Activated B cell treated with CpG ODN at 0.5 μM for 24 hours (primary cell): ENCODE measurements at regions of chr1 and their contacts with region 1.

Region 1: GRCh38 chr1:20507564-20508410 is at the start of gene MUL1:
- DNase-seq: peak; percentile 96
- ATAC-seq: peak; percentile 90
- H3K4me3 Mint-ChIP-seq: peak within 1 kb of the TSS; percentile 89
- H3K27ac Mint-ChIP-seq: peak within 1 kb of the TSS; percentile 89
- H3K4me1 Mint-ChIP-seq: peaks cover 34% of the 10 kb centered on the region
- H3K27me3 Mint-ChIP-seq: peaks cover under 1% of the 10 kb centered on the region
- CTCF ChIP-seq: no peak
- total RNA-seq, gene MUL1: 21.7 TPM in 2 replicates

Region 2: DNA sequence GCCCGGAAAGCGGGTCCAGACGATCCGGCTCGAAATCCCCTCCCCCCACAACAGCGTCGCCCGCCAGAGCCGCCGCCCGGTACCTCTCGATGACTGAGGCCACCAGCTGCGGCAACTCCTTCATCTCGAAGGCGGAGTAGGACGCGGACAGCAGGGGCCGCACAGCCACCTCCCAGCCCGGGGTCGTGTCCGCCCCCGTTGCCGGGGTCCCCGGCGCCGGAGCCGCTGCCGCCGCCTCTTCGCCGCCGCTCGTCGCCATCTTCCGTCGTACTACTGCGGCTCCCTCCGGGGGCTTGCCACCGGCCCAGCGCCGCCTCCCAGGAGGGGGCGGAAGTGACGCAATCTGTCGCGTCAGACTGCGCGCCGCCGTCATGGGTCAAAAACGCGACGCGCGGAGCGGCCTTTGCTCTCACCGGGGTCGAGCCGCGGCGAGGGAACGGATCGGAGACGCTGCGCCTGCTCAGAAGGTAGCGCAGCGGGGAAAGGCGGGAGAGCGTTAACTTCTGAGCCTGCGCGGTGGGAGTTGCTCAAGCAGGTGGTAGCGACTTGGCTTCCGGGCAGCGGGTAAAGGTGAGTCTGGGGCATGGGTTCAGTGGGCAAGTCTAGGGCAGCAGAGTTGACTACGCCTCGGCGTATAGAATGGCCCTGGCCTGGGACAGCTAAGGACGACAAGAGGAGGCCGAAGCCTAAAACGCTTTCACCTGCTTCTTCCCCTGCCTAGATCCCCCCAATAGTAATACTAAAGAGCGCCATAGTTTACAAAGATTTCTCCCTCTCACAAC is 1297.6 kb before region 1 on chr1 and contains the start of gene UBR4:
- CTCF ChIA-PET with region 1: no interaction called
- POLR2A ChIA-PET with region 1: no interaction called
- intact Hi-C with region 1: loop called (anchors 5 kb)
- DNase-seq: peak; percentile 98
- ATAC-seq: peak; percentile 77
- H3K4me3 Mint-ChIP-seq: peak within 1 kb of the TSS; percentile 95
- H3K27ac Mint-ChIP-seq: peak within 1 kb of the TSS; percentile 97
- H3K4me1 Mint-ChIP-seq: peaks cover 57% of the 10 kb centered on the region
- H3K27me3 Mint-ChIP-seq: no peaks in the 10 kb centered on the region
- CTCF ChIP-seq: no peak
- total RNA-seq, gene UBR4: 221 and 262 TPM in 2 replicates

Region 3: GRCh38 chr1:20558191-20558590 is 50.4 kb after region 1 on chr1:
- CTCF ChIA-PET with region 1: no interaction called
- POLR2A ChIA-PET with region 1: no interaction called
- intact Hi-C with region 1: no loop called
- DNase-seq: no peak
- ATAC-seq: no peak
- H3K4me3 Mint-ChIP-seq: no peak overlapping the region
- H3K27ac Mint-ChIP-seq: no peak overlapping the region
- H3K4me1 Mint-ChIP-seq: peaks cover 3% of the 10 kb centered on the region
- H3K27me3 Mint-ChIP-seq: peaks cover 36% of the 10 kb centered on the region
- CTCF ChIP-seq: no peak

Region 4: GRCh38 chr1:20633190-20634064 is 125.6 kb after region 1 on chr1 and contains the start of gene PINK1:
- CTCF ChIA-PET with region 1: no interaction called
- POLR2A ChIA-PET with region 1: interaction called, 4 read pairs
- intact Hi-C with region 1: loop called (anchors 5 kb)
- DNase-seq: peak; percentile 92
- ATAC-seq: peak; percentile 94
- H3K4me3 Mint-ChIP-seq: peak within 1 kb of the TSS; percentile 88
- H3K27ac Mint-ChIP-seq: peak within 1 kb of the TSS; percentile 80
- H3K4me1 Mint-ChIP-seq: peaks cover 12% of the 10 kb centered on the region
- H3K27me3 Mint-ChIP-seq: no peaks in the 10 kb centered on the region
- CTCF ChIP-seq: peak; percentile 94
- total RNA-seq, gene PINK1: 3.4 and 4.2 TPM in 2 replicates

Region 5: GRCh38 chr1:20775700-20776099 is 267.9 kb after region 1 on chr1:
- CTCF ChIA-PET with region 1: no interaction called
- POLR2A ChIA-PET with region 1: no interaction called
- intact Hi-C with region 1: no loop called
- DNase-seq: no peak
- ATAC-seq: no peak
- H3K4me3 Mint-ChIP-seq: no peak overlapping the region
- H3K27ac Mint-ChIP-seq: no peak overlapping the region
- H3K4me1 Mint-ChIP-seq: peaks cover 7% of the 10 kb centered on the region
- H3K27me3 Mint-ChIP-seq: no peaks in the 10 kb centered on the region
- CTCF ChIP-seq: no peak

Region 6: DNA sequence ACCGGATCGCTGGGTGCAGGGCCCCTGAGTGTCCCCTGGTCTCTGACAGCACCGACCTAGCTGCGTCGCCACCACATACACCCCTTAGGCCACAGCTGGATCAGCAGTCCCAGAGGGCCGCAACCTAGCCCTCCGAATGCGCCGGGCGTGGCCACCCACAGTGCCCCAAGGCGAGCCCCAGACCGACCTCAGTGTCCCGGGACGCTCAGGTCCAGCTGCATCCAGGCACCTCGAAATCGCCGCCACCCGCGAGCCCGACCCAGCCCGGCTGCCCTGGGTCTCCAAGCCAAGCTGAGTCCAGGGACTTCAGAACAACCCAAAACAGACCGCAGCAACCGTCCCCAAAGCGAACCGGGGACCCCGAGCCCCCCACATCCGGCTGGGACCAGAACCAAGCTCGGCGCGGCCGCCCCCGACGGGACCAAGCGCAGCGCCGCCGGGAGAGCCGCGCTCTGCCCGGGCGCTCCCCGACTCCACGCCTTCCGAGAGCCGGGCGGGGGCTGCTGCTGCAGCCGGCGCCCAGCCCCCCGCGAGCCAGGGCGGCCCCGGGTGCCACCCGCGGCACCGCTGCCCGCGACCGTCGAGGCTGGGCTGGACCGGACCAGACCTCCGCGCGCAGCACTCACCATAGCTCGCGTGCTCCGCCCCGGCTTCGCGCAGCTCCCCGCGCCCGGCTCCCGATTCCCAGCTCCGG is 837.1 kb after region 1 on chr1:
- CTCF ChIA-PET with region 1: no interaction called
- POLR2A ChIA-PET with region 1: no interaction called
- intact Hi-C with region 1: loop called (anchors 5 kb)
- DNase-seq: peak; percentile 36
- ATAC-seq: peak; percentile 22
- H3K4me3 Mint-ChIP-seq: peak overlapping the region; percentile 92
- H3K27ac Mint-ChIP-seq: peak overlapping the region; percentile 77
- H3K4me1 Mint-ChIP-seq: peaks cover 43% of the 10 kb centered on the region
- H3K27me3 Mint-ChIP-seq: no peaks in the 10 kb centered on the region
- CTCF ChIP-seq: no peak